HepG2 (cell line): ENCODE measurements at regions of chr10 and their contacts with region 1.

Region 1: DNA sequence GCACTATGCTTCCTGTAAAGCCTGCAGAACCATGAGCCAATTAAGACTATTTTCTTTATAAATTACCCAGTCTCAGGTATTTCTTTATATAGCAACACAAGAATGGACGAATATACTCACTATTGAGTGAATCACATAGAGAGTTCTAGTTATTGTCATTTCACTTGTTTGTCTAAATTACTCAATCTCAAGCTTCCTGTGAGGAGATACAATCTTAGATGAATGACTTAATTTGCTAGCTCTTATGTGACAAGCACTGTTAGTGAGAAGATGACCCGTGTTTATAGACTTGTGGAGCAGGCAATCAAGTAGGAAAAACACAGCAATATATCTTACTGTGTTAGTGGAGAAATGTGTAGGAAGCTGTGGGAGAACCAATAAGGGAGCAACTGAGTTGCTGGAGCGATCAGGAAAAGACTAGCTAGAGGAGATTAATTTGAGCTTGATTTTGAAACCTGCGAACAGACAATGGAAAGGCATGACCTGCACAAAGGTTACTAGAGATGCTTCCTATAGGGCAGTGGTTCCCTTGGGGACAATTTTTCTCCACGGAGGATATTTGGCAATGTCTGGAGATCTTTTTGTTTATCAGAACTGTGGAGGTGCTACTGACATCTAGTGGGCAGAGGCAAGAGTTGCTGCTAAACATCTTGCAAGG is 481.1 kb downstream of the SH2D4B start:
- DNase-seq: peak; percentile 49
- ATAC-seq: peak; percentile 94
- H3K4me3 ChIP-seq: no peak overlapping the region
- H3K27ac ChIP-seq: no peak overlapping the region
- H3K4me1 ChIP-seq: no peaks in the 10 kb centered on the region
- H3K27me3 ChIP-seq: no peaks in the 10 kb centered on the region
- CTCF ChIP-seq: peak; percentile 72
- EP300 ChIP-seq: no peak
- POLR2A ChIP-seq: no peak
- RAD21 ChIP-seq: no peak

Region 2: GRCh38 chr10:80553436-80553835 is 465.4 kb before region 1 on chr10:
- CTCF ChIA-PET with region 1: no interaction called
- POLR2A ChIA-PET with region 1: no interaction called
- in situ Hi-C with region 1: no loop called
- intact Hi-C with region 1: no loop called
- DNase-seq: no peak
- ATAC-seq: no peak
- H3K4me3 ChIP-seq: no peak overlapping the region
- H3K27ac ChIP-seq: no peak overlapping the region
- H3K4me1 ChIP-seq: peaks cover 13% of the 10 kb centered on the region
- H3K27me3 ChIP-seq: 0 out of 5 replicates have a peak, but pooled peaks cover 0 to 3% of the 10 kb centered on the region in 2 experiments
- CTCF ChIP-seq: no peak
- EP300 ChIP-seq: no peak
- POLR2A ChIP-seq: no peak
- RAD21 ChIP-seq: no peak

Region 3: GRCh38 chr10:80769700-80770160 is 249.1 kb before region 1 on chr10:
- CTCF ChIA-PET with region 1: no interaction called
- POLR2A ChIA-PET with region 1: no interaction called
- in situ Hi-C with region 1: no loop called
- intact Hi-C with region 1: no loop called
- DNase-seq: no peak
- ATAC-seq: no peak
- H3K4me3 ChIP-seq: no peak overlapping the region
- H3K27ac ChIP-seq: no peak overlapping the region
- H3K4me1 ChIP-seq: no peaks in the 10 kb centered on the region
- H3K27me3 ChIP-seq: no peaks in the 10 kb centered on the region; a peak in 1 of 5 replicates
- CTCF ChIP-seq: no peak
- EP300 ChIP-seq: no peak
- POLR2A ChIP-seq: no peak
- RAD21 ChIP-seq: no peak

Region 4: DNA sequence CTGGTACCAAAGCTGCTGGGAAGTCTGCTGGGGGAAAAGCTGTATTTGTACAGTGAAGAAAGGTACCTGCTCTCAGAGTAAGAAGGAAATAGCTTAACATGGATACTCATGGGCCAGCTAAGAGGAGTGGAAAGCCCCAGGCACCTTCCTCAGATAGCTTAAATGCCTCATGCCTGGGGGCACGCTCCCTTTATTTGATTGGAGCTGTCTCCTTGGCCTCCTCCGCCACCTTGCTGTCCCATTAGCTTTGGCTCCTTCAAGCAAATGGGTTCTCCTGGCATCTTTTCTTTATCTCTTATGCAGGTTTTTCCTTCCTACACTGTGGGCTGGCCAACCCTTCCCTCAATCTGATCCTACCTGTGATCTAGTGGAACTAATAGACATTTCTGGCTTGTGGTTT is 162.7 kb before region 1 on chr10:
- CTCF ChIA-PET with region 1: no interaction called
- POLR2A ChIA-PET with region 1: no interaction called
- in situ Hi-C with region 1: no loop called
- intact Hi-C with region 1: loop called (anchors 1 kb)
- DNase-seq: no peak
- ATAC-seq: no peak
- H3K4me3 ChIP-seq: no peak overlapping the region
- H3K27ac ChIP-seq: no peak overlapping the region
- H3K4me1 ChIP-seq: no peaks in the 10 kb centered on the region
- H3K27me3 ChIP-seq: no peaks in the 10 kb centered on the region; a peak in 1 of 5 replicates
- CTCF ChIP-seq: no peak
- EP300 ChIP-seq: no peak
- POLR2A ChIP-seq: no peak
- RAD21 ChIP-seq: no peak